ENCODE measurements at regions of chr20 and their contacts with region 1.

Region 1: DNA sequence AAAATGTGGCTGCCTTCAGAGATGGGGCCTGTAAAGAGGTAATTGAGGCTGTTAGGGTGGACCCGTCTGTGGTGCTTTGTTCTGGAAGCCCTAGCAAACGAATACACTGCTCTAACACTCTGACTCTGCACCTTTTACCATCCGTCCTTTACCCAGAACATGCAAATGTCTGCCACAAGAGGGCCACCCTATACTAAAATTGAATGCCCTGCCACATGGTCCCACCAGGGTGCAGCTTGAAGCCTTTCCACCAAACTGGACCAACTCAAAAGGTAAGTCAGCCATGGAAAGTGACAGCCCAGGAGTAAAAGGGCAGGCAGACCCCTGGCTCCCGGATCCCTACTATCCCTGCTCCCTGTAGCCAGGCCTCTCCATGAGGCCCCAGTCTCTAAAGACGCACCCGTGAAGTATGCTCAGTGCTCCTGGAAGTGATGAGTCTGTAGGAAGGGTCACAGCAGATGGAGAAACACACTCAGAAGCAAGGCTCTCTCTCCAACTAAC is 5.8 kb upstream of the BFSP1 start:
- DNase-seq: peak; percentile 78
- H3K4me3 Mint-ChIP-seq: no peak overlapping the region
- H3K27ac Mint-ChIP-seq: no peak overlapping the region
- H3K4me1 Mint-ChIP-seq: no peaks in the 10 kb centered on the region
- H3K27me3 Mint-ChIP-seq: peaks cover 2% of the 10 kb centered on the region

Region 2: GRCh38 chr20:17520583-17520982 is 16.4 kb before region 1 on chr20:
- CTCF ChIA-PET with region 1: no interaction called
- intact Hi-C with region 1: no loop called
- DNase-seq: no peak
- H3K4me3 Mint-ChIP-seq: no peak overlapping the region
- H3K27ac Mint-ChIP-seq: no peak overlapping the region
- H3K4me1 Mint-ChIP-seq: no peaks in the 10 kb centered on the region
- H3K27me3 Mint-ChIP-seq: peaks cover under 1% of the 10 kb centered on the region

Region 3: DNA sequence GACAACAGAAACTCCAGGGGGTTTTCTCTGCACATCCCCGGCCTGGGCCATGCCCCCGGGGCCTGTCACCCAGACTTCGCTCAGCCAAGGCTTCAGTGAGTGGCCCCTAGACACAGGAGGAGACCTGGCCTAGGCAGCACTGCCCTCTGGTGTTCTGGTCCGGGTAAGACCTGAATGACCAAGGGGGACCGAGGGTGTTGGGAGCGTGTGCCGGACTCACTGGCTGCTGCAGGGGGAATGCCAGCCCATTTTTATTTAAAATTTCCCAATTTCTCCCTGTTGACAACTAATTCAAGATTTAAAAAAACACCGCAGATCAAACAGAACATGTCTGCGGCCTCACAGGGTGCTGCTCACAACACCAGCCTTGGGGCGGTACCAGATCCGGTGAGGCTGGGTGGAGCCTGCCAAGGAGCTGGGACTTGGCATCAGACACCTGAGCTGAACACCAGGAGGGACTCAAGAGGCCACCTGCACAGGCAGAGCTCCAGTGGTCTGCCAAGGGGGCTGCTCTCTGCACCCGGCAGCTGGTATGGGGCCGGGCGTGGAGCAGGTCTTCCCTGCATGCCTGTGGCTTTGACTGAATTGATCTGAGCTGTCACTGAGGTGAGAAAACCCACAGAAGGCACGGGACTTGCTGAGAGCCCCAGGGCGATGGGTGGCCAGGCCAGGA is 80.7 kb after region 1 on chr20:
- CTCF ChIA-PET with region 1: interaction called, 19 read pairs
- intact Hi-C with region 1: loop called (anchors 1 kb)
- DNase-seq: peak; percentile 66
- H3K4me3 Mint-ChIP-seq: no peak overlapping the region
- H3K27ac Mint-ChIP-seq: no peak overlapping the region
- H3K4me1 Mint-ChIP-seq: peaks cover 3% of the 10 kb centered on the region
- H3K27me3 Mint-ChIP-seq: no peaks in the 10 kb centered on the region

Region 4: GRCh38 chr20:17648791-17649730 is 112.1 kb after region 1 on chr20:
- CTCF ChIA-PET with region 1: interaction called, 8 read pairs
- intact Hi-C with region 1: loop called (anchors 1 kb)
- DNase-seq: peak; percentile 47
- H3K4me3 Mint-ChIP-seq: no peak overlapping the region
- H3K27ac Mint-ChIP-seq: no peak overlapping the region
- H3K4me1 Mint-ChIP-seq: peaks cover 6% of the 10 kb centered on the region
- H3K27me3 Mint-ChIP-seq: no peaks in the 10 kb centered on the region

Region 5: GRCh38 chr20:17688965-17689364 is 152.0 kb after region 1 on chr20:
- CTCF ChIA-PET with region 1: no interaction called
- intact Hi-C with region 1: no loop called
- DNase-seq: no peak
- H3K4me3 Mint-ChIP-seq: no peak overlapping the region
- H3K27ac Mint-ChIP-seq: no peak overlapping the region
- H3K4me1 Mint-ChIP-seq: no peaks in the 10 kb centered on the region
- H3K27me3 Mint-ChIP-seq: peaks cover 42% of the 10 kb centered on the region

Measured in activated naive CD4-positive, alpha-beta T cell treated with anti-CD3 and anti-CD28 coated beads for 36 hours (primary cell).